PC-9 (cell line): ENCODE measurements at regions of chr7 and their contacts with region 1.

Region 1: GRCh38 chr7:23474094-23474828 is 4.0 kb upstream of the IGF2BP3 start:
- DNase-seq: peak; percentile 96 to 99
- H3K4me3 ChIP-seq: peak overlapping the region; percentile 73
- H3K27ac ChIP-seq: peak overlapping the region; percentile 92
- H3K4me1 ChIP-seq: peaks cover 39% of the 10 kb centered on the region
- H3K27me3 ChIP-seq: no peaks in the 10 kb centered on the region
- CTCF ChIP-seq: no peak

Region 2: DNA sequence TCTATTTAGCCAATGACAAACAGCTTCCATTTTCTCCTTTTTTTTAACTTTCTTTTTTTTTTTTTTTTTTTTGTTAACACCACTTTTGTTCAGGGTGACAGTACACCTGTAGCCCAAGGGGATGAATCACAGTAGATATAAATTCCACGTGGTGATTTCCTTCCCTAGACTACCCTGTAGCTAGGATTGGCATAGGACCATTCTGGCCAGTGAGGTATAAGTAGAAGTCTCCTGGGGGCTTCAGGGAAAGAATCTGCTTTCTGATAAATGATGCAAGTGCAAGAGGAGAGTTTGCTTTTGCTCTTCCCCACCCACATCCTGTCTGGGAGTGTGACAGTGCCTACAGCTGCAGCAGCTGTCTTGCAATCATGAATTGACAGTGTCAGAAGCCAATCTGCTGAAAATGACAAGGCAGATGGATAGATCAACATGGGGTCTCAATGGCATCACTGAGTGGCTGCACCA is 588.4 kb before region 1 on chr7:
- CTCF ChIA-PET with region 1: interaction called, 11 read pairs
- POLR2A ChIA-PET with region 1: no interaction called
- intact Hi-C with region 1: no loop called
- DNase-seq: no peak
- H3K4me3 ChIP-seq: no peak overlapping the region
- H3K27ac ChIP-seq: no peak overlapping the region
- H3K4me1 ChIP-seq: no peaks in the 10 kb centered on the region
- H3K27me3 ChIP-seq: no peaks in the 10 kb centered on the region
- CTCF ChIP-seq: no peak

Region 3: GRCh38 chr7:23357190-23358093 is 116.8 kb before region 1 on chr7:
- CTCF ChIA-PET with region 1: interaction called, 4 read pairs
- POLR2A ChIA-PET with region 1: no interaction called
- intact Hi-C with region 1: loop called (anchors 1 kb)
- DNase-seq: peak; percentile 51 to 99
- H3K4me3 ChIP-seq: peak overlapping the region; percentile 28
- H3K27ac ChIP-seq: peak overlapping the region; percentile 63
- H3K4me1 ChIP-seq: peaks cover 51% of the 10 kb centered on the region
- H3K27me3 ChIP-seq: no peaks in the 10 kb centered on the region
- CTCF ChIP-seq: peak; percentile 83

Region 4: DNA sequence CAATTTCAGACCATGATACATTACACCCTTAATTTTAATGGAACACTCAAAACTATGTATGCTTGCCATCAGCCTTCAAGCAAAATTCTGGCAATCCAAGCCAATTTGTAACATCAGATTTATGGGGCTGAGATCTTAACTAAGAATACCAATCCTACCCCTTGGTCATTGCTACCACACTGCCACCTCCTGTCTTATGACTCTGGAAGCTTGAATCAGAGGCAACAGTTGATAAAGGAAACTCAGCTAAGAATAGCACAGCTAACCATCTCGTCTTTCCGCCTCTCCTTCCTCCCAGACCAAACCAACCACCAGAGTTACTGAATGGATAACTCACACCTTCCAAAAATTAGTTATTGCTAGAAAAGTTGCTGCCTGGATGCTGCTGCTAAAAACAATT is 11.4 kb before region 1 on chr7:
- CTCF ChIA-PET with region 1: no interaction called
- POLR2A ChIA-PET with region 1: interaction called, 13 read pairs
- intact Hi-C with region 1: no loop called
- DNase-seq: peak; percentile 17 to 56
- H3K4me3 ChIP-seq: peak overlapping the region; percentile 30; the same call in 1 of the 2 replicates
- H3K27ac ChIP-seq: peak overlapping the region; percentile 92; the same call in 1 of the 2 replicates
- H3K4me1 ChIP-seq: peaks cover 47% of the 10 kb centered on the region
- H3K27me3 ChIP-seq: no peaks in the 10 kb centered on the region
- CTCF ChIP-seq: peak; percentile 42; the same call in 1 of the 2 replicates

Region 5: DNA sequence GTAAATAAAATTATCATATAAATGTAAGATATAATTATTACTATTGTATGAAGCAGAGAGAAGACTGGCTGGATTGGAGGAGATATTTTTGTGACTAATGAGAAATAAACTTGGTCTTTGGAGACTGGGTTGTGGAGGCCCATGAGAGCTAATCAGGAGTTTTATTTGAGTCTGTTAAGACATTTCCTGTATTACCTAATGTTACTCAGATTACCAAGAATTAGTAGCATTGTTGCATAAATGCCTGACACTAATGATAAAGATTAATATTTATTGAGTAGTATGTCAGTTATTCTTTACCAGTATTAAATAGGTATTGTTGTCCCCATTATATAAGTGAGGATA is 130.0 kb after region 1 on chr7:
- CTCF ChIA-PET with region 1: no interaction called
- POLR2A ChIA-PET with region 1: no interaction called
- intact Hi-C with region 1: no loop called
- DNase-seq: no peak
- H3K4me3 ChIP-seq: no peak overlapping the region
- H3K27ac ChIP-seq: no peak overlapping the region
- H3K4me1 ChIP-seq: peaks cover 10% of the 10 kb centered on the region
- H3K27me3 ChIP-seq: no peaks in the 10 kb centered on the region
- CTCF ChIP-seq: no peak

Region 6: DNA sequence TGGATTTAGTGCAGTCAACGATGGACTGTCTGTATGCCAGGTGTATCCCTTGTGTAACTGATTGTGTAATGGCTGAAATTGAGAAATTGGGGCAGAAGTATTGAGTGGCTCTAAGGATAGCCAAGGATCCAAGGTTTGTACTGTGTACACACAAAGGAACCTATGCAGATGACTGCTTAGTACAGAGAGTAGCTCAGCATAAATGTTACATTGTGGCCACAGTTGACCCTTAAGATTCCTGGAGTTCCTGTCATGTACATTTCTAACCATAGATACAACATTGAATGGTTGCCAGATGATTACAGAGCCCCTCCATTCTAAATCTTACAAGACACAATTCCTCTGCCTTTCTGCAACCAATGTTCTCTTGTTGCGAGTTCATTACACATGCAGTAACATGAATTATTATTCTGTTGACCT is 148.3 kb after region 1 on chr7:
- CTCF ChIA-PET with region 1: no interaction called
- POLR2A ChIA-PET with region 1: no interaction called
- intact Hi-C with region 1: no loop called
- DNase-seq: peak in 1 of 2 experiments; percentile 54
- H3K4me3 ChIP-seq: no peak overlapping the region
- H3K27ac ChIP-seq: no peak overlapping the region
- H3K4me1 ChIP-seq: peaks cover 3% of the 10 kb centered on the region; the same call in 1 of the 2 replicates
- H3K27me3 ChIP-seq: no peaks in the 10 kb centered on the region
- CTCF ChIP-seq: no peak

Region 7: DNA sequence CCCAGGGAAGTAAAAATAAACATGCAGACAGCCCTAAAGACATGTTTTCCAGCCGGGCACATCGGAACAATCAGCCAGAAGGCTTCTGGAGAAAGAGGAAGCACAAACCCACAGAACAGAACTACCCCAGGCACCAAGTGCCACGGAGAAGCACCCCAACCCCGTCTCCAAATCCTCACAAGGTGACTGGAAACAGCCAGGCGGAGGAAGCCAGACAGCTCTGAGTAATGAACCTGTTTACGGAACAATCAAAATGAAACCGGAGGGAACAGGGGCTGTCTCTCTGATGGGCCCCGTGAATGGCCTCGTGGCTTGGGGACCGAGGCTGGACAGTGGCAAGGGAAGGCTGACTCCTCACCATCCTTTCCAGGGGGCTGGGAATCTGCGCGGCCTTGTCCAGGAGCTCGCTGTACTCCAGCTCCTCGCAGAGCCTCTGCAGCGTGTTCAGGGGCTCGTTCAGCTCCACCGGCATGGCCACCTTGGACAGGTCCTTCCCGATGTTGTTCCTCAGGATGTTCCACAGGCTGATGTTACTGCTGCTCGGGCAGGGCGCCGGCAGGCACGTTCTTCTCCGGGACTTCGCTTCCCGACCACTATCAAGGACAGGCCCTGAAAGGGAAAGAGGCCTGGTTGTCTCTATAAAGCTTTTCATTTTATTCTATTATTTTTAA is 1360.0 kb after region 1 on chr7:
- CTCF ChIA-PET with region 1: no interaction called
- POLR2A ChIA-PET with region 1: interaction called, 10 read pairs
- intact Hi-C with region 1: no loop called
- DNase-seq: no peak
- H3K4me3 ChIP-seq: no peak overlapping the region
- H3K27ac ChIP-seq: no peak overlapping the region
- H3K4me1 ChIP-seq: no peaks in the 10 kb centered on the region
- H3K27me3 ChIP-seq: no peaks in the 10 kb centered on the region
- CTCF ChIP-seq: no peak